ENCODE measurements at regions of chr2 and their contacts with region 1.

Region 1: DNA sequence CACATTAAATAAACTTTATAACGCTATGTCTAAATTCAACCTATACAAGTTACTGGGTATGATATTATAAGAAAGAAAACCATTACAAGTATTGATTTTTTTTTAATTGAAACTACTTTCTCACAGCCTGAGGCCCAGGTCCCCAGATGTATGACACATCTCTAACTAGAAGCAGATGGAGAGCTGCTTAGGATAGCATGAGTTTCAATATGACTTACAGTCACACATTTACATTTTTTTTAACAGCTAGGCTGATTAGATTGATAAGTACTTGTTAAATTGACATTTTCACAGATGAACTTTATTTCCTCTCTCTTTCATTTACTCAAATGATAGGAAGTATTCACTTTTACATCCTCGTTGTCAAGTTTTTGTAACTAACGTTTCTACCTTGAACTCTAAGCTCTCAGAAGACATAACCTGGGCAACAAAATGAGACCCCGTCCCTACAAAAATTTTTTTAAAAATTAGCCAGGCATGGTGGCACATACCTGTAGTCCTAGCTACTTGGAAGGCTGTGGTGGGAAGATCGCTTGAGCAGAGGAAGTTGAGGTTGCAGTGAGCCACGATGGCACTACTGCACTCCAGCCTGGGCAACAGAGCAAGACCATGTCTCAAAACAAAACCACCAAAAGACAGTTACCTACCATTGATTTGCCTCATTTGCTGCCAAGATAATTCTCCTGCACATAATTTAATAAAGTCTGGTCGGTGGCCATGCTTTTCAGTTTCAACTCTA is 52.4 kb downstream of the STK39 start:
- DNase-seq: no peak
- ATAC-seq: no peak
- H3K4me3 ChIP-seq: no peak overlapping the region
- H3K27ac ChIP-seq: no peak overlapping the region
- H3K4me1 ChIP-seq: peaks cover 50% of the 10 kb centered on the region
- H3K27me3 ChIP-seq: no peaks in the 10 kb centered on the region
- CTCF ChIP-seq: no peak

Region 2: GRCh38 chr2:168156661-168157060 is 38.3 kb before region 1 on chr2:
- CTCF ChIA-PET with region 1: no interaction called
- POLR2A ChIA-PET with region 1: no interaction called
- intact Hi-C with region 1: loop called (anchors 5 kb)
- DNase-seq: peak; percentile 80
- ATAC-seq: peak; percentile 73
- H3K4me3 ChIP-seq: no peak overlapping the region
- H3K27ac ChIP-seq: peak overlapping the region; percentile 92
- H3K4me1 ChIP-seq: peaks cover 29% of the 10 kb centered on the region
- H3K27me3 ChIP-seq: no peaks in the 10 kb centered on the region
- CTCF ChIP-seq: no peak

Region 3: GRCh38 chr2:168166902-168167510 is 27.9 kb before region 1 on chr2:
- CTCF ChIA-PET with region 1: no interaction called
- POLR2A ChIA-PET with region 1: no interaction called
- intact Hi-C with region 1: loop called (anchors 2 kb)
- DNase-seq: peak; percentile 95
- ATAC-seq: peak; percentile 93
- H3K4me3 ChIP-seq: no peak overlapping the region
- H3K27ac ChIP-seq: peak overlapping the region; percentile 83
- H3K4me1 ChIP-seq: peaks cover 34% of the 10 kb centered on the region
- H3K27me3 ChIP-seq: no peaks in the 10 kb centered on the region
- CTCF ChIP-seq: no peak

Region 4: GRCh38 chr2:168246483-168247340 is 51.8 kb after region 1 on chr2:
- CTCF ChIA-PET with region 1: no interaction called
- POLR2A ChIA-PET with region 1: no interaction called
- intact Hi-C with region 1: loop called (anchors 5 kb)
- DNase-seq: peak; percentile 54
- ATAC-seq: peak; percentile 49
- H3K4me3 ChIP-seq: peak overlapping the region; percentile 98
- H3K27ac ChIP-seq: peak overlapping the region; percentile 53
- H3K4me1 ChIP-seq: peaks cover 36% of the 10 kb centered on the region
- H3K27me3 ChIP-seq: no peaks in the 10 kb centered on the region
- CTCF ChIP-seq: peak; percentile 46